ENCODE measurements at regions of chr10 and their contacts with region 1.

Region 1: DNA sequence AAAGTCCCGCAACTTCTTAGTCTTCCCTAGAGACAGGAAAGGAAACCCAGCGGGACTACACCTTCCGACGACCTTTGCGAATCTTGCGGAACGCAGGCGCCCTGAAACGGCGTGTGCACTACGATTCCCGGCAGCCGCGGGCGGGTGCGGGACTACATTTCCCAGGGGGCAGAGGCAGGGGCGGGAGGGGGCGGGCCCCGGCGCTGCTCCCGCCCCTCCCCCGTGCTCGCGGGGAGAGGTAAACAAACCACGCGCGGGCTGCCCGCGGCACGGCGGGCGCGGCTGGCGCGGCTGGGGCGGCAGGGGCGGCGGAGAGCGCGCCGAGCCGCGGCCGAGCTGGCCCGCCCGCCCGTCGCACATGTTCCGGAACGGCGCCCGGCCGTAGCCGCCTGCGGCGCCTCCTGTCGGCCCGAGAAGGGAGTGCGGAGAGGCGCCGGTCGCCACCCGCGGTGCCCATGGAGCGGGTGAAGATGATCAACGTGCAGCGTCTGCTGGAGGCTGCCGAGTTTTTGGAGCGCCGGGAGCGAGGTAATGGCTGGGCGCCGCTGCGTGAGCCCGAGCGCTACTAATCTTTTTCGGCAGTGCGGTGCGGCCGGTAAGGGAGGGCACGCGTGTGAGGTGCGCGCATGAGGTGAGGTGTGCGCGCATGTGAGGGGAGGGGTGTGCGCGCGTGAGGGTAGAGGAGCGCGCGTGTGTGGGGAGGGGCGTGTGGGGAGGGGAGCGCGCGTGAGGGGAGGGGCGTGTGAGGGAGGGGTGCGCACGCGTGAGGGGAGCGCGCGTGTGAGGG is 18.5 kb downstream of the MXI1 start:
- DNase-seq: no peak
- ATAC-seq: peak; percentile 92
- H3K4me3 ChIP-seq: peak overlapping the region; percentile 90
- H3K27ac ChIP-seq: no peak overlapping the region
- H3K4me1 ChIP-seq: peaks cover 3% of the 10 kb centered on the region; the same call in 1 of the 2 replicates
- H3K27me3 ChIP-seq: peaks cover 0 to 3% of the 10 kb centered on the region in 2 experiments; a peak in 2 of 4 replicates
- CTCF ChIP-seq: peak; percentile 58 to 74 (median 63)
- EP300 ChIP-seq: no peak
- POLR2A ChIP-seq: peak; percentile 63
- RAD21 ChIP-seq: peak; percentile 42

Region 2: DNA sequence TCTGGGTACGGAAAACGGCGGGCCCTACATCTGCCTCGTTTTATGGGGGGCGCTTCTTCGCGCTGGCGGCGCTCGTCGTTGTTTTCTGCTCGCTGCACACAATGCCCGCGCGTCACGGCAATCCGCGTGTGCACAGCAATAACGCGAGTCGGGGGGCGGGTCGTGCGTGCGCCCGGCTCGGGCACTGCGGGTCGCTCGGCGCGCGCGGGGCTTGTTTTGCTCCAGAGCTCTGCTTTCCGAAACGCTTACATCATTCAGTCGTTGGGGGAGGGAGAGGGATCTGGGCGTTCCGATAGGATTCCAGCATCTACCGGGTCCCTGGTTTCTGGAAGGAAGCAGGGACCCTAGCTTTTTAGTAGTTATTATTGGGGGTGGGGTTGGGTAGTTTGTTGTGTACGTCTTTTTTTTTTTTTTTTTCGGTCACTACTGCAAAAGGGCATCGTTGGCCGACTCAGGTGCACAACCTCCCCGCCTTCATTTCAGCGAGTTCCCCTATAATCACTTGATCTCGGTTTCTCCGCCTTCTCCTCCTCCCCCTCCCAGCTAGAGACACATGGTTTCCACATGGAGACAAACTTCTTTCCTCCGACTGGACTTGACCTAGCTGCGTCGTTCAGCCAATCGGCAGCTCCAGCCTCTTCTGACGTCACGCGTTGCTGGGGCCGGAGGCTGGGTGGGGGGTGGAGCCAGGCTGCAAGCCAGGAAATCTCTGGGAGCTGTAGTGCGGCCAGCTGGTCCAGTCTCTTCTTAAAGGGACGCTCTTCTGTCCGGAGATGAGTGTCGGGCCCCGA is 15.1 kb before region 1 on chr10:
- CTCF ChIA-PET with region 1: interaction called, 62 read pairs
- POLR2A ChIA-PET with region 1: interaction called, 10 read pairs
- RAD21 ChIA-PET with region 1: interaction called, 12 read pairs
- SMC1A ChIA-PET with region 1: interaction called, 67 read pairs
- in situ Hi-C with region 1: no loop called
- intact Hi-C with region 1: no loop called
- DNase-seq: peak; percentile 90
- ATAC-seq: peak; percentile 87
- H3K4me3 ChIP-seq: peak overlapping the region; percentile 73
- H3K27ac ChIP-seq: no peak overlapping the region
- H3K4me1 ChIP-seq: peaks cover 22% of the 10 kb centered on the region
- H3K27me3 ChIP-seq: peaks cover 4 to 7% of the 10 kb centered on the region in 2 experiments; a peak in 3 of 4 replicates
- CTCF ChIP-seq: no peak
- EP300 ChIP-seq: peak in 1 of 2 experiments; percentile 46; a peak in 1 of 4 replicates
- POLR2A ChIP-seq: peak; percentile 65
- RAD21 ChIP-seq: no peak

Measured in GM12878 (cell line).